Right cardiac atrium (tissue), 5 donors: ENCODE measurements at regions of chr22 and their contacts with region 1.

Region 1: GRCh38 chr22:35491908-35492380 is 48.7 kb upstream of the RASD2 start:
- DNase-seq: no peak
- ATAC-seq: no peak
- H3K4me3 ChIP-seq: no peak overlapping the region
- H3K27ac ChIP-seq: no peak overlapping the region
- H3K4me1 ChIP-seq: no peaks in the 10 kb centered on the region
- H3K27me3 ChIP-seq: no peaks in the 10 kb centered on the region

Region 2: GRCh38 chr22:35454416-35455054 is 37.4 kb before region 1 on chr22:
- intact Hi-C with region 1: loop called in 1 of 4 experiments (anchors 2 kb)
- DNase-seq: no peak
- ATAC-seq: peak in 1 of 2 donors; percentile 46
- H3K4me3 ChIP-seq: no peak overlapping the region
- H3K27ac ChIP-seq: no peak overlapping the region
- H3K4me1 ChIP-seq: no peaks in the 10 kb centered on the region
- H3K27me3 ChIP-seq: no peaks in the 10 kb centered on the region